ENCODE measurements at regions of chr13 and their contacts with region 1.

Region 1: GRCh38 chr13:42594970-42595571 is 21.1 kb downstream of the TNFSF11 start:
- DNase-seq: peak; percentile 52
- ATAC-seq: peak; percentile 74
- H3K4me3 ChIP-seq: no peak overlapping the region
- H3K27ac ChIP-seq: no peak overlapping the region
- H3K4me1 ChIP-seq: no peaks in the 10 kb centered on the region
- H3K27me3 ChIP-seq: no peaks in the 10 kb centered on the region
- CTCF ChIP-seq: peak; percentile 71
- EP300 ChIP-seq: no peak
- POLR2A ChIP-seq: no peak
- RAD21 ChIP-seq: no peak

Region 2: GRCh38 chr13:43132257-43132656 is 537.2 kb after region 1 on chr13:
- CTCF ChIA-PET with region 1: interaction called, 3 read pairs
- POLR2A ChIA-PET with region 1: no interaction called
- in situ Hi-C with region 1: loop called (anchors 25 kb)
- intact Hi-C with region 1: no loop called
- DNase-seq: peak; percentile 52
- ATAC-seq: peak; percentile 90
- H3K4me3 ChIP-seq: no peak overlapping the region
- H3K27ac ChIP-seq: no peak overlapping the region
- H3K4me1 ChIP-seq: no peaks in the 10 kb centered on the region
- H3K27me3 ChIP-seq: peaks cover 2 to 9% of the 10 kb centered on the region in 2 experiments; a peak in 3 of 5 replicates
- CTCF ChIP-seq: peak; percentile 71
- EP300 ChIP-seq: no peak
- POLR2A ChIP-seq: no peak
- RAD21 ChIP-seq: no peak

Region 3: DNA sequence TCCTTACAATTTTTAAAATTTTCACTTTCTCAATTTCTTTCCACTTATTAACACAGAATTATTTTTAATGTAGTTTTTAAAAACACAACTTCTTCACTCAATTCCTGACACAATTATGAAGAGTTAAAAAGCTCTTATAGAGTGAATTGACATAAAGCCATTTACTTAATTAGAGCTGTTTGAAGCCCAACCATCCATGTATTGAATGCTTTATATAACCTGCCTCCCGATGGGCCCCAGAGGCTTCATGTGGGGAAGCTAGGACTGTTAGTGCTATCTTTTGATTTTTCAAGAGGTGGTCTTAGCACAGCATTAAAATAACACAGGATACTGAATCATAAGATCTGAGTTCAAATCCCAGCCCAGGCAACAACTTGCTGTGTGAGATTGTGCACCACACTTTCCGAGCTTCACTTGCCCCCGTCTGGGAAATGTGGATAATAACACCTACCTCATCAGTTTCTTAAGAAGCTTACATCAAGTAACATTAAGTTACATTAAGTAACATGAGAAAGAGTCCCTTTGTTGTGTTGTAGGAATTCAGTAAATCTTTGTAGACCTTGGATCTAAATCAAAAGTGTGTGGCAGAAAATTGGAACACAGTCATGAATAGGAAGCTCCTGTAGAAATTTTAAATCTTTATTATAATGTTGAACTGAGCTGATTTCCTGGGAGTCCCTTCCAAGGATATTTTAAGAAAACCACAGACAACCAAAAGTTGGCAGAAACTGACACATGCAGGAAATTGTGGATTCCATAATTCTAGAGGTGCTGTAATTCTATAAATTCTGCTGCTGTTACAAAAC is 1197.2 kb after region 1 on chr13:
- CTCF ChIA-PET with region 1: no interaction called
- POLR2A ChIA-PET with region 1: no interaction called
- in situ Hi-C with region 1: loop called (anchors 10 kb)
- intact Hi-C with region 1: no loop called
- DNase-seq: no peak
- ATAC-seq: no peak
- H3K4me3 ChIP-seq: no peak overlapping the region
- H3K27ac ChIP-seq: no peak overlapping the region
- H3K4me1 ChIP-seq: peaks cover 3% of the 10 kb centered on the region; the same call in 1 of the 2 replicates
- H3K27me3 ChIP-seq: peaks cover 1 to 22% of the 10 kb centered on the region in 2 experiments; a peak in 3 of 5 replicates
- CTCF ChIP-seq: no peak
- EP300 ChIP-seq: no peak
- POLR2A ChIP-seq: no peak
- RAD21 ChIP-seq: no peak

Region 4: GRCh38 chr13:43804461-43805070 is 1209.5 kb after region 1 on chr13:
- CTCF ChIA-PET with region 1: interaction called, 10 read pairs
- POLR2A ChIA-PET with region 1: no interaction called
- in situ Hi-C with region 1: loop called (anchors 10 kb)
- intact Hi-C with region 1: loop called (anchors 1 kb)
- DNase-seq: peak; percentile 39
- ATAC-seq: peak; percentile 54
- H3K4me3 ChIP-seq: no peak overlapping the region
- H3K27ac ChIP-seq: no peak overlapping the region
- H3K4me1 ChIP-seq: no peaks in the 10 kb centered on the region
- H3K27me3 ChIP-seq: no peaks in the 10 kb centered on the region
- CTCF ChIP-seq: peak; percentile 42
- EP300 ChIP-seq: no peak
- POLR2A ChIP-seq: no peak
- RAD21 ChIP-seq: no peak

Measured in HepG2 (cell line).